Activated CD4-positive, alpha-beta T cell treated with anti-CD3 and anti-CD28 coated beads for 36 hours (primary cell): ENCODE measurements at regions of chr6 and their contacts with region 1.

Region 1: DNA sequence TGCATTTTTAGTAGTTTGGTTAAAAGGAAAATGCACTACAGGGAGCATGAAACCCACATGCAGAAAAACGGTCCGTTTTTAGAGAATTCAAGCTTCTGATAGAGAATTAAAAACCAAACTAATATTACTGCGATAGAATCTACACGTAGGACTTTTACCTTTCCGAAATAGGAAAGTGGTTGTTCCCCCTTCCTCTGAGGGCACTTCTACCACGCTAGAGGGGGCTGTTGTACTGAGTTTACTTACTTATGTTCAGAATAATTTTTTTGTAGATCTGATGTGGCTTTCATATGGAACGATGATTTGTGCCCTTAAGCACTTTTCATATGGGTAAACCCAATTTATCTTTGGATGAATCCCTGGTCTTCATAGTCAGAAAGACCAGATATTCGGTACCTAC is 264.3 kb upstream of the PLN start:
- DNase-seq: peak; percentile 65
- ATAC-seq: peak; percentile 61
- H3K4me3 Mint-ChIP-seq: no peak overlapping the region
- H3K27ac Mint-ChIP-seq: no peak overlapping the region
- H3K4me1 Mint-ChIP-seq: peaks cover 2% of the 10 kb centered on the region
- H3K27me3 Mint-ChIP-seq: peaks cover 4% of the 10 kb centered on the region

Region 2: DNA sequence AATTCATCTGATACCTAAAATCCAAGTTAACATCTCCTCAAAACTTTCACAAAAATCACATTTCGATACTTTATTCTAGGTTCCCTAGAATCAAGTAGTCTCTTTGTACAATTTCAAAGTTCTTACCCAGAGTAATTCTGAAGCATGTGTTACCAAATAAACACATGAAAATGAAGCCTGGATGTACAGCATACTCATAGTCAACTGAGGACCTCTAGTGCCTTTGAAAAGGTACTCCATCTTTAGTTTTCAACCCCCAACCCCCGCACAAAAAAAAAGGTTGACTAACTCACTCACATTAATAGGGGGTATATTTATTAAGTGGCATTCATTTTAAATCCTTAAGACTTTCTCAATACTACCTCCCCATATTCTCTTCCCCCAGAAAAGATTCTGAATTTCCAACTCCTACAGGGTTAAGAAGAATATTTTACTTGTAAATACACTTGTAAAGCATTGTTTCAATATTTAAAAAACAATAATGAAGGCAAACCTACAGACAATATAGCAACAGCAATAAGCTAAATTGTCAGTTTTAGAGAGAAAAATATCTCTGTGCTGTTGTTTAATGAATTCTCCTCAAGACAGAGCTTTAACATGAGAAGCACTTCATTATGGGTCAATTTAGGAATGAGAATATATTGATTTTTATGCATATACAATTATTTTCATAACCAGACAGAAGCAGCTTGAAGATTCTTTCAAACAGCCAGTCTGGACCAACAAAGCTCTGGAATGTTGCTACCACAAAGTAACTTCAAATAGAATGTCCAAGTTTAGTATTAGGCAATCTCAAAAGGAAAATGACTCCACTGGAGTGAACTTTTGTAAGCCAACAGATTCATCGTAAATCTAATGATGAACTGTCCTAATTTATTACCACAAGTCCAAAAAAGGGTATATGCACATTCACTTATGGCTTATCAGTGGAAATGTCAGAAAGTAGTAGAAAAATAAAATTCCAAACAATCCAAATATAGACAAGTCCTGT is 267.6 kb after region 1 on chr6:
- CTCF ChIA-PET with region 1: interaction called, 3 read pairs
- POLR2A ChIA-PET with region 1: no interaction called
- intact Hi-C with region 1: loop called (anchors 1 to 2 kb)
- DNase-seq: no peak
- ATAC-seq: peak; percentile 79
- H3K4me3 Mint-ChIP-seq: no peak overlapping the region
- H3K27ac Mint-ChIP-seq: peak overlapping the region; percentile 45
- H3K4me1 Mint-ChIP-seq: peaks cover 24% of the 10 kb centered on the region
- H3K27me3 Mint-ChIP-seq: no peaks in the 10 kb centered on the region

Region 3: GRCh38 chr6:118618679-118619377 is 335.1 kb after region 1 on chr6:
- CTCF ChIA-PET with region 1: interaction called, 3 read pairs
- POLR2A ChIA-PET with region 1: no interaction called
- intact Hi-C with region 1: loop called (anchors 1 kb)
- DNase-seq: peak; percentile 78
- ATAC-seq: peak; percentile 94
- H3K4me3 Mint-ChIP-seq: no peak overlapping the region
- H3K27ac Mint-ChIP-seq: no peak overlapping the region
- H3K4me1 Mint-ChIP-seq: peaks cover 39% of the 10 kb centered on the region
- H3K27me3 Mint-ChIP-seq: no peaks in the 10 kb centered on the region

Region 4: DNA sequence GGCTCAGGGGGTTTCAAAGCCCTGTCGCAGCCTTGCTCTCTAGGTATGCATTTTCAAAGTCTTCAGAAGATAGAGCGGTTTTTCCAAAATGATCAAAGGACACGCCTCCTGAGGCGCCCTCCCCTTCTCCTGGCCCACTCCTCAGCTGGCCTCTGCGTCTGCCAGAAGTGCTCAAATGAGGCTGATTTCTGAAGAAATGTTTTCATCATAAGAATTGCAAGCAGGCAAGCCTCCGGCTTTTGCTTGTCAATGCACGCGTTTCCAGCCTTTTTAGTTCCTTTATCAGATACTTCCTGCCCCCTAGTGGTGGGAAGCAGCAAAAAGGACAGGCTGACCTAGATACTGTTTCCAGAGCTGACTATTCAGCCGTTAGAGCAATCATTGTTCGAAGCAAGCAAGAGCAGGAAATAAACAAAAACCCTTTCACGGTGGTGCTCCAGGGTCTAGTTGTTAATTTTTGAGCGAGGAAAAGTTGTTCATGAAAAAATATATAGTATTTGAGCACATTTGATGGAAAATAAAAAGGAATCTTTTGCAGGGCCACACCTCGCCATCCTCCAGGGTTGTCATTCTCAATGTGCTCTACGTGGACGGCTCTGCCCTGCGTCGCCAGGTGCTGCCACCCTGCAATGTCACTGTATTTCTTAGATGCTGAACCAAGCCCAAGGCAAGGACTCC is 516.8 kb after region 1 on chr6:
- CTCF ChIA-PET with region 1: interaction called, 3 read pairs
- POLR2A ChIA-PET with region 1: no interaction called
- intact Hi-C with region 1: loop called (anchors 1 to 2 kb)
- DNase-seq: peak; percentile 89
- ATAC-seq: peak; percentile 96
- H3K4me3 Mint-ChIP-seq: no peak overlapping the region
- H3K27ac Mint-ChIP-seq: peak overlapping the region; percentile 7
- H3K4me1 Mint-ChIP-seq: peaks cover 28% of the 10 kb centered on the region
- H3K27me3 Mint-ChIP-seq: no peaks in the 10 kb centered on the region

Region 5: DNA sequence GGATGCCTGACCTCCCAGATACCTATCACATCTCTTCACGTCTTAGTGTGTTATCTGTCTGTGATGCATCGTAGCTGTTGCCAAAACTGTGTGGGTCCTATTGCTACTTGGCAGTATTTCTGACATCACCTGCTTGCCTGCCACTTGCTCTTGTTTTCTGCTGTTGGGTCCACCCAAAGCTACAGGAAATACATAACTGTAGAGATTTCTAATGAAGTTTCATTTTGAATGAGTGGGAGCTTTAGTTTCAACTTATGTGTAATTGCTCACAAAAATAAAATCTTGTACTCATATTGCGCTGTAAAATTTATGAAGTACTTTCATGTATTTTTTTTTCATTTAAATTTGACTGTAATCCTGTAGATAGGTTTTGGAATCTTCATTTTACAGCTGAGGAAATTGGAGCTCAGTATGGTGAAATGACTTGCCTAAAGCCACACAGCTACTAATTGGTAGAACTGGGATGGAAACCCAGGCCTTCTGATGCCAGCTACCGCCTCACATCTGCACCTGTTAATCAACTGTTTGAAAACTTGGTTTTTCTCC is 1179.4 kb after region 1 on chr6:
- CTCF ChIA-PET with region 1: no interaction called
- POLR2A ChIA-PET with region 1: no interaction called
- intact Hi-C with region 1: no loop called
- DNase-seq: peak; percentile 40
- ATAC-seq: peak; percentile 88
- H3K4me3 Mint-ChIP-seq: no peak overlapping the region
- H3K27ac Mint-ChIP-seq: no peak overlapping the region
- H3K4me1 Mint-ChIP-seq: peaks cover 16% of the 10 kb centered on the region
- H3K27me3 Mint-ChIP-seq: no peaks in the 10 kb centered on the region